ENCODE measurements at regions of chr7 and their contacts with region 1.

Region 1: DNA sequence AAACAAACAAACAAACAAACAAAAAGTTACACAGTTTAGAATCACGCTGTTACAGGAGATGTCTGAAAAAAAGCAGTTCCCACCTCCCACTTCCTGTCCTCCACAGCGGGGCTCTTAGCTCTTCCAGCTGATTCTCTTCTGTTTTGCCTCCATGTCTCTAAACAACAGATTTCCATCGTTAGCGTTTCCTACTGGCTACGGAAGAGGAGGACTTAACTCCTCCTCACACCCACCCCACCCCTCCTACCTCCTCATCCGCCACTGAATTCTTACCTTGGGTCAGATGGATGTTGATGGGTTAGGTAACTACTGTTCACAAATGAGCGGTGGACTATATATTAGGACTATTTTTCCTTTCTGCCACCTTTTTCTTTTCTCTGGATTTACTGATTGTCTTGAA is 36.8 kb upstream of the NUB1 start:
- DNase-seq: no peak
- ATAC-seq: no peak
- H3K4me3 ChIP-seq: no peak overlapping the region
- H3K4me3 Mint-ChIP-seq: no peak overlapping the region
- H3K27ac ChIP-seq: no peak overlapping the region
- H3K27ac Mint-ChIP-seq: no peak overlapping the region
- H3K4me1 ChIP-seq: peaks cover 8% of the 10 kb centered on the region
- H3K4me1 Mint-ChIP-seq: peaks cover 6% of the 10 kb centered on the region
- H3K27me3 ChIP-seq: peaks cover 0 to 14% of the 10 kb centered on the region in 2 experiments
- H3K27me3 Mint-ChIP-seq: peaks cover 38% of the 10 kb centered on the region
- CTCF ChIP-seq: no peak

Region 2: GRCh38 chr7:151068068-151068773 is 236.6 kb before region 1 on chr7:
- CTCF ChIA-PET with region 1: no interaction called
- POLR2A ChIA-PET with region 1: no interaction called
- intact Hi-C with region 1: no loop called
- DNase-seq: no peak
- ATAC-seq: no peak
- H3K4me3 ChIP-seq: no peak overlapping the region
- H3K4me3 Mint-ChIP-seq: no peak overlapping the region
- H3K27ac ChIP-seq: no peak overlapping the region
- H3K27ac Mint-ChIP-seq: no peak overlapping the region
- H3K4me1 ChIP-seq: no peaks in the 10 kb centered on the region
- H3K4me1 Mint-ChIP-seq: no peaks in the 10 kb centered on the region
- H3K27me3 ChIP-seq: no peaks in the 10 kb centered on the region
- H3K27me3 Mint-ChIP-seq: no peaks in the 10 kb centered on the region
- CTCF ChIP-seq: no peak

Region 3: GRCh38 chr7:151172273-151173141 is 132.3 kb before region 1 on chr7:
- CTCF ChIA-PET with region 1: interaction called, 6 read pairs
- POLR2A ChIA-PET with region 1: no interaction called
- intact Hi-C with region 1: loop called (anchors 1 to 5 kb)
- DNase-seq: peak; percentile 52 to 88 (median 78)
- ATAC-seq: peak; percentile 87
- H3K4me3 ChIP-seq: no peak overlapping the region
- H3K4me3 Mint-ChIP-seq: no peak overlapping the region
- H3K27ac ChIP-seq: no peak overlapping the region
- H3K27ac Mint-ChIP-seq: no peak overlapping the region
- H3K4me1 ChIP-seq: peaks cover 5% of the 10 kb centered on the region
- H3K4me1 Mint-ChIP-seq: peaks cover 10% of the 10 kb centered on the region
- H3K27me3 ChIP-seq: peaks cover 0 to 12% of the 10 kb centered on the region in 2 experiments
- H3K27me3 Mint-ChIP-seq: peaks cover 62% of the 10 kb centered on the region
- CTCF ChIP-seq: peak; percentile 100

Region 4: DNA sequence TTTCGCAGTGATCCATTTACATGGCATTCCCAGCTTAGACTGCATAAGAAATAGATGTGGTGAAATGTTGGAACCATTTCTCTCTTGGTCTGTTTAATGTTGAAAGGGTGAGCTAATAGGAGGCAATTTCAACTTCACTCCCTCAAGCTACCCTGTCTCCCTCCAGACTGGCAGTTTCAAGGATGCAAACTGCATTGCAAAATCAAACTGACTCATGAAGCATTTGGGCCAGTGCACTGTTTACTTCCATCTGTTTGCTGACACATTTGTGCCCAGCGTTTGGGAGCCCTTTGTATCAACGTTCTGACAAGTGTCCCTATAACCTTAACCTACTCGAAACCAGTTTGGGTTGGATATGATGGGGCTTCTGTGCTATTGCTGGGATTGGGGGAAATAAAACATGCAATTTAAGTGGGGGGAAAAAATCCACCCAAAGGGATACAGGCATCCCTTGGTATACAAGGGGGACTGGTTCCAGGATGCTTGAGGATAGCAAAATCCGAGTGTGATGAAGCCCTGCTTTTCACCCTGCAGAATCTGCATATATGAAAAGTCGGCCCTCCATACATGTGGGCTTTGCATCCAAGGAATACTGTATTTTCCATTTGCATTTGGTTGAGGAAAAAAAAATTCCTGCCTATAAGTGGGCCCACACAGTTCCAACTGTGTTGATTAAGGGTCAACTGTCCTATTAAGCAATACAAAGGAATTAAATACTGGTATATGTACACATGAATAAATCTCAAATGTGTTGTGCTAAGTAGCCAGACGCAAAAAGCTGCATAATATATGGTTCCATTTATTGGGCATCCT is 199.3 kb after region 1 on chr7:
- CTCF ChIA-PET with region 1: no interaction called
- POLR2A ChIA-PET with region 1: no interaction called
- intact Hi-C with region 1: no loop called
- DNase-seq: no peak
- ATAC-seq: no peak
- H3K4me3 ChIP-seq: no peak overlapping the region
- H3K4me3 Mint-ChIP-seq: no peak overlapping the region
- H3K27ac ChIP-seq: no peak overlapping the region
- H3K27ac Mint-ChIP-seq: no peak overlapping the region
- H3K4me1 ChIP-seq: peaks cover 20% of the 10 kb centered on the region
- H3K4me1 Mint-ChIP-seq: peaks cover 78% of the 10 kb centered on the region
- H3K27me3 ChIP-seq: no peaks in the 10 kb centered on the region
- H3K27me3 Mint-ChIP-seq: no peaks in the 10 kb centered on the region
- CTCF ChIP-seq: no peak

Region 5: DNA sequence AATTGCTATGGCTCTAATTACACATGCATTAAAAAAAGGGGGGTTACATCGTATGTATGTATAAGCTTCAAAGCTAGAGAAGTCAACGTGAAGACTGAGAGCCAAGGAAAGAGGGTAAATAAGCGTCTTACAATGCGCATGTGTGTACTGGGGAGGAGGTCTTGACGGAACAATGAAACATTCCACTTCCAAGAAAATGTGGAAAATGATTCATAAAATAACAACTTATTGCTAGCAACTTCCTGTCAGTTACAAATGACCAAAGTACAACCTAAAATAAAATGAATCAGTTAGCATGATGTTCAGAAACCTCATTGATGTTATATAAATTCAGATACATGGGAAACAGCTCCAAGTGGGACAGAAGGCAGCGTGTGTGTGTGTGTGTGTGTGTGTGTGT is 318.9 kb after region 1 on chr7:
- CTCF ChIA-PET with region 1: no interaction called
- POLR2A ChIA-PET with region 1: no interaction called
- intact Hi-C with region 1: no loop called
- DNase-seq: no peak
- ATAC-seq: no peak
- H3K4me3 ChIP-seq: no peak overlapping the region
- H3K4me3 Mint-ChIP-seq: no peak overlapping the region
- H3K27ac ChIP-seq: no peak overlapping the region
- H3K27ac Mint-ChIP-seq: no peak overlapping the region
- H3K4me1 ChIP-seq: no peaks in the 10 kb centered on the region
- H3K4me1 Mint-ChIP-seq: peaks cover 37% of the 10 kb centered on the region
- H3K27me3 ChIP-seq: no peaks in the 10 kb centered on the region
- H3K27me3 Mint-ChIP-seq: no peaks in the 10 kb centered on the region
- CTCF ChIP-seq: no peak